ENCODE measurements at regions of chr3 and their contacts with region 1.

Region 1: GRCh38 chr3:10122724-10123123 is 7.2 kb downstream of the BRK1 start:
- DNase-seq: no peak
- ATAC-seq: no peak
- H3K4me3 ChIP-seq: no peak overlapping the region
- H3K4me3 Mint-ChIP-seq: no peak overlapping the region
- H3K27ac ChIP-seq: no peak overlapping the region
- H3K27ac Mint-ChIP-seq: peak overlapping the region in 1 of 2 donors; percentile 0
- H3K4me1 ChIP-seq: peaks cover 0 to 10% of the 10 kb centered on the region in 2 experiments
- H3K4me1 Mint-ChIP-seq: peaks cover 38 to 49% (median 49%) of the 10 kb centered on the region in 3 donors
- H3K27me3 ChIP-seq: no peaks in the 10 kb centered on the region
- H3K27me3 Mint-ChIP-seq: no peaks in the 10 kb centered on the region

Region 2: DNA sequence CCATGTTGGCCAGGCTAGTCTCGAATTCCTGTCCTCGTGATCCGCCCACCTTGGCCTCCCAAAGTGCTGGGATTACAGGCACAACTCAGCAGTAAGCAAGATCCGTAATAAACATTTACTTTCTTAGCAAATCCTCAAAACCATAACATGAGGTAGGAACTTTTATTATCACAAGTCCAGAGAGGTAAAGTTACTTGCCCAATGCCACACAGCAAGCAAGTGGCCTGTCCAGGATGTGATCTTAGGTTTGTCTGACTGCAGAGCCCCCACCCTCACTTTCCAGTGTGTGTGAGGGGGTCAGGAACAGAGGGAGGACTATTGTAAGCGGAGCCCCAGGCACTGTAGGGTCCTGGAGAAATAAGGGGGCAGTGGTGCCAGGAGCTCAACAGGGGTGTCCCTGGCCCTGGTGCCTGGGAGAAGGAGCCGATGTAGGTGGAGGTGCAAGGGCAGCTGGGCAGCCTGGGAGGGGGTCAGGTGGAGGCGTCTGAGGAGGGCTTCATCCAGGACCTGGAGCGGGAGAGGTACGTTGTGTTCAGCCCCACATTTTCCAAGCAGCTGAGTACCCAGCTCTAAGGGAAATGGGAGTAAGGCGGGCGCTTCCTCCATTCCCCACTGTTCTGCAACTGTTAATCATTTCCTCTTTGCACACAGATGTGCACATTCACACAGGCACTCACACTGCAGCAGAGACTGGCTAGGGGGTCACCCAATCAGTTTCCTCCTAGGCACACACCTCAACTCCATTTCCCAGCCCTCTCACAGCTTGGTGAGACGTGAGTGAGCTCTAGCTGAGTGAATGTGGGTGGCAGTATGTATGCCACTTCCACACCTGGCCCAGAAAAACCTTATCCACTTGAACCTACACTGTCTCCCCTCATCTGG is 284.8 kb before region 1 on chr3:
- CTCF ChIA-PET with region 1: no interaction called
- POLR2A ChIA-PET with region 1: no interaction called
- DNase-seq: no peak
- ATAC-seq: no peak
- H3K4me3 ChIP-seq: no peak overlapping the region
- H3K4me3 Mint-ChIP-seq: no peak overlapping the region
- H3K27ac ChIP-seq: no peak overlapping the region
- H3K27ac Mint-ChIP-seq: peak overlapping the region in 1 of 2 donors; percentile 28
- H3K4me1 ChIP-seq: peaks cover 0 to 10% of the 10 kb centered on the region in 2 experiments
- H3K4me1 Mint-ChIP-seq: peaks cover 12 to 13% (median 13%) of the 10 kb centered on the region in 3 donors
- H3K27me3 ChIP-seq: no peaks in the 10 kb centered on the region
- H3K27me3 Mint-ChIP-seq: no peaks in the 10 kb centered on the region

Region 3: DNA sequence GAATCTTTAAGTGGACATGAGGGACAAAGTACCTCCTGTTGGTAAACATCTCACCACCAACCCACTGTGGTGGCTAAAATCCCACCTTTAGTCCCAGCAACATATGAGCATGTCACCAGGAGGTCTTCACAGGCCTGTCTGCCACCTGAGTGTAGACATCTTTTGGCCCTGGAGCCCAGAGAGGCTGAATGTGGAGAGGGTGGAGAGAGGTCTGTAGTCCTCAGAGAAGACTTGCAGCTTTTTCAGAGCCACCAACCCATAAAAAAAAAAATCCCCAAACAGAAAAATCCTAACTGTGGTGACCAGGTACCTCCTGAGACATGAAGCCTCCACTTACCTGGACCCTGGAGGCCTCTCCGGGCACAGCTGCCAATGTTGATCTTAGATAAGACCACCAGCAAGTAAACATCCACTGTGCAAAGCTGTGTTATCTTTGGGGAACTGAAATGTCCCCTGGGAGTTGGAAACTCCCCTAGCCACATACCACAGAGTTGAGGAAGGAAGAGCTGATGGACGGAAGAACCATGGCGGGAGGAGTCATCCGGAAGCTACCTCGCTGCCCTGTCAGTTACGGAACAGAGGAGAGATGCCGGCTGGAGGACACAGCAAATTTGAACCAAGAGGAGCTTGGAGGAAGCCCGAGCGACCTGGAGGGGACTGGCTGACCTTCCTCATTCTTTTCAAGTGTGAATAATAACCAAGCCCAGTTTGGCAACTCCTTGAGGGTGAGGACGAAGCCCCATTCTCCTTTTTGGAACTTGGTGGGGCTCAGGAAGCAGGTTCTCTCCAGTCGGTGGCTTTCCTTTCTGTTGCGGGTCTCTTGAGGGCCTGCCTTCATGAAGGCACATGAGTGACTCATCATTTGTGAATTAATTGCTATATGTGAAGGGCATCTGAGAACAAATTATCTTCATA is 170.0 kb after region 1 on chr3 and contains the start of gene GHRL:
- CTCF ChIA-PET with region 1: interaction called in 1 of 2 experiments, 7 read pairs
- POLR2A ChIA-PET with region 1: interaction called in 1 of 2 experiments, 16 read pairs
- DNase-seq: peak in 6 of 35 experiments; percentile 3 to 38 (median 12)
- ATAC-seq: peak in 3 of 4 experiments; percentile 20 to 52 (median 24)
- H3K4me3 ChIP-seq: no peak within 1 kb of the TSS
- H3K4me3 Mint-ChIP-seq: peak within 1 kb of the TSS in 1 of 3 donors; percentile 0
- H3K27ac ChIP-seq: no peak within 1 kb of the TSS
- H3K27ac Mint-ChIP-seq: peak within 1 kb of the TSS; percentile 50 to 69
- H3K4me1 ChIP-seq: peaks cover 0 to 8% of the 10 kb centered on the region in 2 experiments
- H3K4me1 Mint-ChIP-seq: peaks cover 8 to 18% (median 15%) of the 10 kb centered on the region in 3 donors
- H3K27me3 ChIP-seq: no peaks in the 10 kb centered on the region
- H3K27me3 Mint-ChIP-seq: no peaks in the 10 kb centered on the region
- total RNA-seq, gene GHRL: 0.29 to 1.7 (median 0.61) TPM in 4 of 5 donors, not detected in the other